ENCODE measurements at regions of chr2 and their contacts with region 1.

Region 1: GRCh38 chr2:239035361-239036078 is 187.6 kb downstream of the TWIST2 start:
- DNase-seq: peak; percentile 91
- H3K4me3 Mint-ChIP-seq: no peak overlapping the region
- H3K27ac Mint-ChIP-seq: no peak overlapping the region
- H3K4me1 Mint-ChIP-seq: no peaks in the 10 kb centered on the region
- H3K27me3 Mint-ChIP-seq: peaks cover 19% of the 10 kb centered on the region

Region 2: GRCh38 chr2:238945433-238946150 is 89.9 kb before region 1 on chr2:
- intact Hi-C with region 1: no loop called
- DNase-seq: peak; percentile 66
- H3K4me3 Mint-ChIP-seq: no peak overlapping the region
- H3K27ac Mint-ChIP-seq: no peak overlapping the region
- H3K4me1 Mint-ChIP-seq: peaks cover 6% of the 10 kb centered on the region
- H3K27me3 Mint-ChIP-seq: no peaks in the 10 kb centered on the region

Region 3: GRCh38 chr2:239015218-239015900 is 20.2 kb before region 1 on chr2:
- intact Hi-C with region 1: no loop called
- DNase-seq: no peak
- H3K4me3 Mint-ChIP-seq: no peak overlapping the region
- H3K27ac Mint-ChIP-seq: no peak overlapping the region
- H3K4me1 Mint-ChIP-seq: no peaks in the 10 kb centered on the region
- H3K27me3 Mint-ChIP-seq: no peaks in the 10 kb centered on the region

Region 4: DNA sequence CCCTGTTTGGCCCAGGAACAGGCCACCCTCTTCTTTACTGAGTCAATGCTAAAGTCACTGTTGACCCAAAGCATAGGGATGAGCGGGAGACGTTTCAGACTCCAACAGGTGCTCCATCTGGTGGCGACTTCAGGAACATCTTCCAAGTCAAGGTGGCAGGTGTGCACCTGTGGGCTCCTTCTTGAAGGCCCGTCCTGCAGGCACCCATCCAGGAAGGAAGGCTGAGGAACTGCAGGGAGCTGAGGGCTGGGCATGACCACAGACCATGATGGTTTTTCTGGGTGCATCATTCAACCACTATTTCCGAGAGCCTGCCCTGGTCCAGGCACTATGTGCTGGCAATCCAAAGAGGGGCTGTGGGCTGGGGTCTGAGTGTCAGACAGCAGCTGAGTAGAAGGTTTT is 846.8 kb after region 1 on chr2:
- intact Hi-C with region 1: loop called (anchors 2 kb)
- DNase-seq: peak; percentile 87
- H3K4me3 Mint-ChIP-seq: no peak overlapping the region
- H3K27ac Mint-ChIP-seq: no peak overlapping the region
- H3K4me1 Mint-ChIP-seq: peaks cover 2% of the 10 kb centered on the region
- H3K27me3 Mint-ChIP-seq: peaks cover 12% of the 10 kb centered on the region

Region 5: DNA sequence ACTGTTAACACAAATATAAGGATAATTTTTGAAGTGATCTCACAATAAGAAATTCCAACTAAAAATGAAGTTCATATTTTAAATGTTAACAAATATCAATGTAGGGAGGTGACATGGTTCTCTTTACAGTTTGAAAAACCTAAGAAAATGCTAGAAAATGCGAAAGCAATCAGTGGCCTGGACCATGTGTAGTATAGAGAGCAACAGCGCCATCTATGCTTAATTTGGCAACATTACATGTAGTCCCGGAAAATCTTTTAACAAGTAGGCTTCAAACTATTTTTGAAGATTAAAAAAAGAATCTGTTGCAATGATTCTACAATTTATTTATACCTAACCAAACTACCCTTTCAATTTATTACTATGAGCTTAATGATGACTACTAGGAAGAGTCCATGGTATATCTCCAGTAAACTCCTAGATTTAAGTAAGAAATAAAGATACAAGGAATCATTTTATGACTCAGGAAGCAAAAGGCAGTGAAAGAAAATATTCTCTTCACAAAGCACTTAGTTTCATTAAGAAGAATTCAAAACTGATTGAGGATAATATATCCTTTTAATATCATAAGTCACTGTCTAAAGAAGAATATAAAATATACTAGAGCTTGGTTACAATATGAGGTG is 956.3 kb after region 1 on chr2:
- intact Hi-C with region 1: loop called (anchors 10 kb)
- DNase-seq: peak; percentile 73
- H3K4me3 Mint-ChIP-seq: no peak overlapping the region
- H3K27ac Mint-ChIP-seq: no peak overlapping the region
- H3K4me1 Mint-ChIP-seq: no peaks in the 10 kb centered on the region
- H3K27me3 Mint-ChIP-seq: no peaks in the 10 kb centered on the region

Region 6: GRCh38 chr2:240143801-240144648 is 1108.5 kb after region 1 on chr2:
- intact Hi-C with region 1: loop called (anchors 10 kb)
- DNase-seq: peak; percentile 94
- H3K4me3 Mint-ChIP-seq: no peak overlapping the region
- H3K27ac Mint-ChIP-seq: no peak overlapping the region
- H3K4me1 Mint-ChIP-seq: no peaks in the 10 kb centered on the region
- H3K27me3 Mint-ChIP-seq: no peaks in the 10 kb centered on the region

Measured in activated CD4-positive, alpha-beta T cell treated with anti-CD3 and anti-CD28 coated beads, Interleukin-2, amount 10 ng/mL, durations not matched to agents 24 days and 14 days (primary cell).